ENCODE measurements at regions of chr6 and their contacts with region 1.

Region 1: DNA sequence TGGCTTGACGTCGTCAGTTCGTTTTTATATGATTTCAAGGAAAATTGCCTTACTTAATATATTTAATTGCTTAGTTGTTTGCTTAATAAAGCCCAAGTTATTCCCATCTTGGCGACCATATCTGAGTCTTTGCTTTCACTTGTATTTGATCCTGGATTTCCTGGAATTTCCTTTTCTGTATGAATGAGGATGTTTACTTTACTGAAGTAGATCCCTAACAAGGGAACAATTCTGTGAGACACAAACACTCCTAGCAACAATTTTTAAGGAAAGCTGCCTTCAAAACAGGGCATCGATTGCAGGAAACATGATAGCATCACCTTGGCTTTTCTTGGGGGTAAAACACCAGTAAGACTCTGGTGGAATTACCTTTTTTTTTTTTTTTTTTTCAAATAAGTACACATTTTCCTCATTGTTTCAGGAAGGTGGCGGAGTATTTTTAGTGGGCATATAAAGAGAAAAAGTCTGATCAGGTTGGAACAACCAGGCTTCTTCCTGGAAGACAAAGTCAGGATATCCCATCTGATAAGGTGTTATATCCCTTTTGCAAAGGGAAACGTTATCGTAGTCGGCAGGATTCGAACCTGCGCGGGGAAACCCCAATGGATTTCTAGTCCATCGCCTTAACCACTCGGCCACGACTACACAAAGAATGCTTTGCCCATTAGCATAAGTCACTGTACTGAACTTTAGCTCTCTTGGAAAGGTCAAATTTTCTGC is 68.5 kb upstream of the ZNF184 start:
- DNase-seq: no peak
- H3K4me3 ChIP-seq: peak overlapping the region; percentile 32
- H3K27ac ChIP-seq: no peak overlapping the region
- H3K4me1 ChIP-seq: peaks cover 19% of the 10 kb centered on the region
- H3K27me3 ChIP-seq: no peaks in the 10 kb centered on the region
- CTCF ChIP-seq: no peak

Region 2: GRCh38 chr6:27038498-27038897 is 502.9 kb before region 1 on chr6:
- CTCF ChIA-PET with region 1: interaction called, 13 read pairs
- POLR2A ChIA-PET with region 1: no interaction called
- intact Hi-C with region 1: no loop called
- DNase-seq: no peak
- H3K4me3 ChIP-seq: no peak overlapping the region
- H3K27ac ChIP-seq: no peak overlapping the region
- H3K4me1 ChIP-seq: peaks cover 3% of the 10 kb centered on the region; the same call in 1 of the 2 replicates
- H3K27me3 ChIP-seq: no peaks in the 10 kb centered on the region
- CTCF ChIP-seq: no peak

Region 3: DNA sequence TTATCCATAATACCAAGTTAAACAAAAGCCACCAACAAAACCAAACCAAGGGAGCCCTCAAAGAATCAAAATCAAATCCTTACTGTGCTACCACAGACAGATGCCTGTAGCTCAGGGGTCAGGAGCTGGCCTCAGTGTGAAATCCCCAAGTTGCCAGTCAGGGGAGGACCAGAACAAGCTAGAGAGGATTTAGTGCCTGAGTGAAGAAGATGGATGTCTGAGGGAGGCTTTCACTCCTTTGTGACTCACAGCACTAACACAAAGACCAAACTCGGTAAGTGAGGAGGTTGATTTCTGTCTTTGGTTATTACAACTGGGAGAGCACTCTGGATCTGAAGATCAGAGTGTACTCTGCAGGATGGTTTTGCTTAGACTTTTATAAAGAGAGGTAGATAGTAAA is 121.4 kb after region 1 on chr6:
- CTCF ChIA-PET with region 1: no interaction called
- POLR2A ChIA-PET with region 1: interaction called, 10 read pairs
- intact Hi-C with region 1: no loop called
- DNase-seq: no peak
- H3K4me3 ChIP-seq: no peak overlapping the region
- H3K27ac ChIP-seq: no peak overlapping the region
- H3K4me1 ChIP-seq: peaks cover 10% of the 10 kb centered on the region
- H3K27me3 ChIP-seq: no peaks in the 10 kb centered on the region
- CTCF ChIP-seq: no peak

Measured in PC-9 (cell line).